Calu3 (cell line): ENCODE measurements at regions of chr2 and their contacts with region 1.

Region 1: DNA sequence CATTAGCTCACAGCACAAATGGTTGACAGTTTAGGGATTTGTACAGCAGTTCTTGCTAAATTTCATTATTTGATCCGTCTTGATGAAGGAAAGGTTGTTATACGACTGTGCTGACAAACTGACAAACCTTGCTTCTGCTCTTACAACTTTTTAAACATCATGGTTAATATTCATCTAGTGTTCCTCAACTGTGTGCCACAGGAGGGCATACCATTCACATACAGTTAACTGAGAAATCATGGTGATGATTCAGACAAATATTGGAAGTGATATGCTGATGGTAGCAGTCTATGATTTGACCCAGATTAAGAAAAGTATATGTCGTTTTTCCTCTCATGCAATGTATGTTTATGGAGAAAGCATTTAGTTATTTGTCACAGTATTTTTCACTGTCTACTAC is 129.8 kb upstream of the FSIP2 start:
- DNase-seq: peak; percentile 28
- H3K4me3 Mint-ChIP-seq: peak overlapping the region; percentile 10
- H3K27ac Mint-ChIP-seq: no peak overlapping the region
- H3K4me1 Mint-ChIP-seq: no peaks in the 10 kb centered on the region
- H3K27me3 Mint-ChIP-seq: no peaks in the 10 kb centered on the region
- CTCF ChIP-seq: no peak

Region 2: DNA sequence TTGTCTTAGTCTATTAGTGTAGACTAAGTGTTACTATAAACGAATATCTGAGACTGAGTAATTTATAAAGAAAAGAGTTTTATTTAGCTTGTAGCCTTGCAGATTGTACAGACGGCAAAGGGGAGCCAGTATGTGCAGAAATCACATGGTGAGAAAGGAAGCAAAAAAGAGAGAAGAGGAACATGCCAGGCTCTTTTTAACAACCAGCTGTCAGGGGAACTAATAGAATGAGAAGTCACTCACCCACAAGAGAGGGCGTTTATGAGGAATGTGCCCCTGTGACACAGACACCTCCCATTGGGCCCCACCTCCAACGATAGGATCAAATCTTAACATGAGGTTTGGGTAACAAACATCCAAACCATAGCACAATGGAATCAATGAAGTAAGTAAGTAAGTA is 1031.1 kb before region 1 on chr2:
- CTCF ChIA-PET with region 1: no interaction called
- intact Hi-C with region 1: no loop called
- DNase-seq: no peak
- H3K4me3 Mint-ChIP-seq: no peak overlapping the region
- H3K27ac Mint-ChIP-seq: no peak overlapping the region
- H3K4me1 Mint-ChIP-seq: no peaks in the 10 kb centered on the region
- H3K27me3 Mint-ChIP-seq: no peaks in the 10 kb centered on the region
- CTCF ChIP-seq: no peak

Region 3: DNA sequence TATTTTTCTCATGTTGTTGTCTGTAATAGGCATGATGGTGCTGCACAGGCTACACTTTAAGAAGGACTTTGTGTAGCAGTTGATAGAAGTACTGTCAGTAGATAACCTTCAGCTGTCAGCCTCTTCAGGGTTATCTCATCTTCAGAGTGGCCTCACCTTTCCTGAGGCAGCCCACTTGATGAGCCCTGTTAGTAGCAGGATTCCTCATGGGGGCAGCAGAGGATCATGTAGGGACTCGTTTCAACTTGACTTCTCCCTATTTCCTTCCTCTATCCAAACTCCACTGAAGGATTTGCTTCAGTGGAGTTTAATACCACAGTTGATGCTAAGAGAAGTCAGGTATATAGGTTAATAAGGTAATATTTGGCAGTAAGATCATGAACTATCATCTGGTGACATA is 400.5 kb before region 1 on chr2:
- CTCF ChIA-PET with region 1: no interaction called
- intact Hi-C with region 1: loop called (anchors 10 kb)
- DNase-seq: peak; percentile 73
- H3K4me3 Mint-ChIP-seq: no peak overlapping the region
- H3K27ac Mint-ChIP-seq: no peak overlapping the region
- H3K4me1 Mint-ChIP-seq: peaks cover 9% of the 10 kb centered on the region
- H3K27me3 Mint-ChIP-seq: no peaks in the 10 kb centered on the region
- CTCF ChIP-seq: peak; percentile 60

Region 4: GRCh38 chr2:185291035-185291647 is 317.7 kb before region 1 on chr2:
- CTCF ChIA-PET with region 1: no interaction called
- intact Hi-C with region 1: loop called (anchors 10 kb)
- DNase-seq: peak; percentile 67
- H3K4me3 Mint-ChIP-seq: no peak overlapping the region
- H3K27ac Mint-ChIP-seq: no peak overlapping the region
- H3K4me1 Mint-ChIP-seq: no peaks in the 10 kb centered on the region
- H3K27me3 Mint-ChIP-seq: no peaks in the 10 kb centered on the region
- CTCF ChIP-seq: peak; percentile 78

Region 5: GRCh38 chr2:185738679-185739472 is 130.1 kb after region 1 on chr2 and contains the start of gene FSIP2:
- CTCF ChIA-PET with region 1: no interaction called
- intact Hi-C with region 1: loop called (anchors 1 kb)
- DNase-seq: peak; percentile 98
- H3K4me3 Mint-ChIP-seq: peak within 1 kb of the TSS; percentile 81
- H3K27ac Mint-ChIP-seq: peak within 1 kb of the TSS; percentile 53
- H3K4me1 Mint-ChIP-seq: peaks cover 18% of the 10 kb centered on the region
- H3K27me3 Mint-ChIP-seq: no peaks in the 10 kb centered on the region
- CTCF ChIP-seq: peak; percentile 99
- total RNA-seq, gene FSIP2: 0.27 and 0.35 TPM in 2 replicates

Region 6: GRCh38 chr2:186129767-186130581 is 521.2 kb after region 1 on chr2:
- CTCF ChIA-PET with region 1: no interaction called
- intact Hi-C with region 1: loop called (anchors 10 kb)
- DNase-seq: peak; percentile 46
- H3K4me3 Mint-ChIP-seq: peak overlapping the region; percentile 26
- H3K27ac Mint-ChIP-seq: peak overlapping the region; percentile 93
- H3K4me1 Mint-ChIP-seq: peaks cover 51% of the 10 kb centered on the region
- H3K27me3 Mint-ChIP-seq: no peaks in the 10 kb centered on the region
- CTCF ChIP-seq: no peak